ENCODE measurements at regions of chr5 and their contacts with region 1.

Region 1: DNA sequence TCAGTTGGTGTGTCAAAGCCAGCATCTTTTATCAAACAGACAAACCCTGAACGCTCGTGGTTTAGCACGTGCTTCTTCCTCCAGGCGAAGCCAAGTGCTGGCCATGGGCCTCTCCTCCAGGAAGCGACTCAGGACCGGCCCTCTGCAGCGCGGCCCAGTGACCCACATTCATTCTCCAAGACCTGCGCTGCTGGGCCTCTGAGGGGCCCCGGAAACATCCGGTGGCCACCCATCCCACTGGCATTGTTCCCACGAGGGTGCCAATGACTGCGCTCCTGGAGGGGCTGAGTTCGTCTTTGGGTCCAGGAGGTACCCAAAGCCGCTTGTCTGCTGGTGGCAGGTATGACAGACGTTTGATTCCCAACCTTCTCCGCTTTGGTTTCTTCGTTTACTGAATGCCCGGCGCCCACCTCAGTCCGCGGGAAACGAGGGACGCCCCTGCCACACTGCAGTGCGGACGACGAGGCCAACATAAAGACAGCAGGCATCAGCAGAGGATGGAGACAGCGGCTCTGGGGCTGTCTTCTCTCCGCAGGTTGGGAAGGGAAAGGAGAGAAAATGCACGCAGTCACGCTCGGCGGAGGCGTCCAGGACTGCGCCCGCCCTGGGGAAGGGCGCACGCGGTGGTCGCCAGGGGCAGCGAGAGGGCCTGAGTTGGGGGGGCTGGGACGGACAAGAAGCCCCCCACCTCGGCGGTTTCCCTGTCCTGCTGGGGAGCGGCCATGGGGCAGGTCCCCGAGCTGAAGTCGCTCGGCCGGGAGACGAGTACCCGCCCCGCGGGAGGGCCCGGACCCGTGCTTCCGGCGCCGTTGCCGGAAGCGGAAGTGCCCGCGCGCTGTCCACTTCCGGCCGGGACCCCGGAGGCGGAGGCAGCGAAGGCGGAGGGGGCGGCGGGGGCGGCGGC is at the start of gene EXOC3:
- DNase-seq: no peak
- H3K4me3 ChIP-seq: peak within 1 kb of the TSS; percentile 99
- CTCF ChIP-seq: no peak

Region 2: DNA sequence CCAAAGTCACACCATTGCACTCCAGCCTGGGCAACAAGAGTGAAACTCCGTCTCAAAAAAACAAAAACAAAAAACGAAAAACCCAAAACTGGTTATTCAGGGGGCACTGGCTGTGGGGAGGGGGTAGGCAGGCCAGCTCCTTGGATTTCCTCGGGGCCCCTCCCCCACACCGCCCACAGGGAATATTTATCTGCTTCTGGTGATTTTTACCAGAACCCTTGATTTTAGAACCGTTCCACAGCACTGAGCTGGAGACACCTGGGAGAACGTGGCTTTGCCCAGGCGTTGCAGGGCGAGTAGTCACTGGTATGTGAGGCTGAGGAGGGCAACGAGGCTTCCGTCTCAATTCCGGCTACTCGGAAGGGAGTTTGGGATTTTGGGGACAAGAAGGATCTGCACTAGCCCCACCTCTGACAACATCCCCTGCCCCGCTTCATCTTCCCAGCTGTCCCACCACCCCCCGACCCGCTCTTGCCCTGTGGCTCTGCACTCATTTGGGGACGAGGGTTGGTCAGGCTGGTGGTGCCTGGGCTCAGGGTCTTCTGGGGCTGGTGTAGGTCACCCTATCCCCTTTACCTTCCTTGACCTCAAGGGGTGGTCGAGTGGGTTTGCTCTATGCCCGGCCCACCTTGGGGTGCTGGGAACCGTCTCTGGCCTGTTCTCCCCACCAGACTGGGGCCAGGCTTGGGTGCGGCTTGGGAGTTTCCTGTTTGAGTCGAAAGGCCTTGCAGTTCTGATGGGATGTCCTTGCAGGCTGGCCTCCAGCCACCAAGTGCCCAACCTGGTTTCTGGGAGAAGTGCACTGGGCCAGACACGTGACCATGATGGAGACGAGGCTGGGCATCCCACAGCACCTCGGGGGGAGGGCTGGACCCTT is 117.6 kb before region 1 on chr5:
- CTCF ChIA-PET with region 1: interaction called, 21 read pairs
- POLR2A ChIA-PET with region 1: no interaction called
- DNase-seq: no peak
- H3K4me3 ChIP-seq: no peak overlapping the region
- CTCF ChIP-seq: no peak

Region 3: DNA sequence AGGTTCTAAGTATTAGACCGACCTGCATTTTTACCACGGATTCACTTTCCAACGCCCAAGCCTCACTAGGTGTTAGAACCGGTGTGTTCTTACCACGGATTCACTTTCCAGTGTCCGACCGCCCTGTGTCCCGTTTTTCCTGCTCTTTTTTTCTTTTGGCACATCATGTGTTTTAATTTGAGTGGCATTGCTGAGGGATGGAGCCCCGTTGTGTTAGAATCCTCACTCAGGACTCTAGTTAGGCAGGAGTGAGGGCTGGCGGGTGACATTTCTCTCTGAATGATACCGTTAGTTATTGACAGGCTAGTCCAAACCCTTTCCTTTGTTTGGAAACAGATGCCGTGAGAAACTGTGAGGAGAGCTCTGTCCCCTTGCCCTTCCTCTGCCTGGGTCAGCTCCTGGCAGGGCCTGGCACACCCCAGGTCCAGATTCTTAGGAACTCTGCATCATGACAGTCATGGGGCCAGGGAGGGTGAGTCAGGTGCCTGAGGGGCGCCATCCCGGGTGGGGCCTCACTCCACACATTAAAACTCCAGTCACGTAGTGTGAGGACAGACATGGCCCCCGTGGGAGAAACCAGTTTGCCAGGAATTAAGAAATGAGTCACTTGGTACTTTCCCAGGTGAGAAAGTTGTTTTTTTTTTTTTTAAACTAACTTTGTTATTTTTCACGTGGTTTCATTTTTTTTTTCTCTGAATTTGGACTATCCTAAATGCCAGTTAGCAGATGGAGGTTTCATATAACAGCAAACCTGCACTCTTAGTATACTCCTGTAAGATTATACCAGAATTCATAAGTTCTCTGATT is 16.2 kb after region 1 on chr5:
- CTCF ChIA-PET with region 1: interaction called, 37 read pairs
- POLR2A ChIA-PET with region 1: no interaction called
- DNase-seq: no peak
- H3K4me3 ChIP-seq: no peak overlapping the region
- CTCF ChIP-seq: no peak

Region 4: DNA sequence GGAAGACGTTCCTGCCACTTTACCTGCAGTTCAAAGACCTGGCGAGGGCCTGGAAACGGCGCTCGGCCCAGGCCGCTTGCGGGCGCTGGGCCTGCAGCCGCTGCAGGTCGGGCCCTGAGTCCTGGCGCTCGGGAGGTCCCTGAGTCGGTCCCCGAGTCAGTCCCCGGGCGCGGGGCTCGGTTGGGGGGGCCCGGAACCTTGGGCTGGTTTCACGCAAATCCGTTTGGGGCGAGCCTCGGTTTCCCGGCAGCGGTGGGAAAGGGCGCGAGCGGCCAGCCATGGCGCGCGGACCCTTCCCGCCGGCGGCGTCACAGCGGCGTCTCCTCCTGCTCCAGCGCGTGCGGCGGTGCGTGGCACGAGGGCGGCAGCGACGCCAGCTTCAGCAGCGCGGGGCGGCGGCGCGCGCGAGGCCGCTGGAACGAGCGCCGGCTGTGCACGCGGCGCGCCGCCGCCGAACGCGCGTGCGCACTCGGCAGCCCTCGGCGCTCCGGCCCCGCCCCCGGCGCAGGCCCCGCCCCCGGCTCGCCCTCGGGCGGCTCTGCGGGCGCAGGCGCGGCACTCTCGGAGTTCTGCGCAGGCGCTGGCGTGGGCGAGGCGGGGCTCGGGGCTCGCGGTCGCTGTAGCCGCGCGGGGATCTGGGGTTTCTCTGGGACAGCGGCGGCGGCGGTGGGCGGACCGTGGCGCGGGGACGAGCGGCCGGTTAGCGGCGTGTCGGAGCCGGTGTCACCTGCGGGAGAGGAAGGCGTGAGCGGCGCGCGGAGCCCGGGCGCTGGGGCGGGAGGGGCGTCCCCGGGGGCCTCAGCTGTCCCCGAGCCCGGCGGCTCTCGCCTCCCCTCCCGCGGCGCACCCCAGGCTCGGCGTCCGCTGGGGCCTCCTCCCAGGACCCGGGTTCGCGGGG is 30.3 kb after region 1 on chr5:
- CTCF ChIA-PET with region 1: interaction called, 10 read pairs
- POLR2A ChIA-PET with region 1: no interaction called
- DNase-seq: no peak
- H3K4me3 ChIP-seq: peak overlapping the region; percentile 71
- CTCF ChIP-seq: no peak